Left colon (tissue), 2 donors: ENCODE measurements at regions of chr10 and their contacts with region 1.

Region 1: DNA sequence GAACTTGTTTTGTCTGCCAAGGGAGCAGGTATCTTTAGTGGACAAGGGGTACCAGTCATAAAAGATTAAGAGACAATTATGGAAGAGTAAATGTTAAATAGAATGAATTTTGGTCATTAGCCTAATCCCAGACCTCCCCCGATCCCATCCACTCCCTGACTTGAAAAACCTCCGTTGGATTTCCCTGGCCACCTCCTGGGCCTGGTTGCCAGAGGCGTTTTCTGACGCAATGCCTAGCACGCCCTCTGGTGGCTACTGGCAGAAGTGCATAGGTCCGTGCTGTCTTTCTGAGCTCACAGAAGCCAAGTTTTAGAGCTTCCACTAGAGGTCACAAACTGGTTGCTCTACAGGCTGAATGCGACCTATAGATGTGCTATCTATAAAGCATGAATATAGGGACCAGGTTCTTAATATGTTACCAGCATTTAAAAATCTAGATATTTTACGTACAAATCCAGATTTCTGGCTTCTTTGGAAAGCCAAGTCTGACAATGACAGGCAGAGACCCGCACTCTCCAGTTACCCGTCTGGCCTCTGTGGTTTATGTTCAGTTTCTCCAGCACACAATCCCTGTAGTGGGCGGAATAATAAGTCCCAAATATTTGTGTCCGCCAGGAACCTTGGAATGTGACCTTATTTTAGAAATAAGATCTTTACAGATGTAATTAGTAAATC is 39.8 kb downstream of the SPOCK2 start:
- DNase-seq: peak; percentile 79 to 95
- ATAC-seq: peak; percentile 90

Region 2: GRCh38 chr10:71888623-71889387 is 159.8 kb before region 1 on chr10:
- intact Hi-C with region 1: no loop called
- DNase-seq: peak; percentile 74 to 81
- ATAC-seq: peak; percentile 65

Region 3: DNA sequence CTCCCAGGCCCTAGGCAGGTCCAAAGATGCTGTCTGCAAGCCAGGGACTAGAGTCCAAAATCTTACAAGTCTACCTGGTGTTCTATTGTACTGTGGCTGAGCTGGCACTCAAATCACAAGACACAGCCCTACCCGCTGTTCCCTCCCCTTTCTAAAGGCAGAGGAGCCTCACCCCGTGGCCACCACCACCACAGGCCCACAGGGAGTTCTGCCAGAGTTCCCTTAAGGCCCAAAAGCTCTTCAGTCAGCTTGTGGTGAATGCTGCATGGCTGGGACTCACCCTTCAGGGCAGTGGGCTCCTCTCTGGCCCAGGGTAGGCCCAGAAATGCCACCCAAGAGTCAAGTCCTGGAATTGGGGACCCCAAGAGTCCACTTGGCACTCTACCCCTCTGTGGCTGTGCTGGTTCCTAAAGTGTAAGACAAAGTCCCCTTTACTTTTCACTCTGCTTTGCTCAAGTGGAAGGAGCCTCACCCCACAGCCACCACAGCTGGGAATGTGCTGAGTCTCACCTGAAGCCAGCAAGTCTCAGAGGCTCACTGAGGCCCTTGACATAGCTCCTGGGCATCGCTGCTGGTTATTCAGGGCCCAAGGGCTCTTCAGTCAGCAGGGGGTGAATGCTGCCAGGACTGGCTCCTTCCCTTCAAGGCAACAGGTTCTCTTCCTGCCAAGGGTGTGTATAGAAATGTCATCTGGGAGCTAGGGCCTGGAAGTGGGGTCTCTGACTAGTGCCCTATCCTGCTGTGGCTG is 148.7 kb before region 1 on chr10:
- intact Hi-C with region 1: loop called in 1 of 2 experiments (anchors 5 kb)
- DNase-seq: no peak
- ATAC-seq: no peak

Region 4: DNA sequence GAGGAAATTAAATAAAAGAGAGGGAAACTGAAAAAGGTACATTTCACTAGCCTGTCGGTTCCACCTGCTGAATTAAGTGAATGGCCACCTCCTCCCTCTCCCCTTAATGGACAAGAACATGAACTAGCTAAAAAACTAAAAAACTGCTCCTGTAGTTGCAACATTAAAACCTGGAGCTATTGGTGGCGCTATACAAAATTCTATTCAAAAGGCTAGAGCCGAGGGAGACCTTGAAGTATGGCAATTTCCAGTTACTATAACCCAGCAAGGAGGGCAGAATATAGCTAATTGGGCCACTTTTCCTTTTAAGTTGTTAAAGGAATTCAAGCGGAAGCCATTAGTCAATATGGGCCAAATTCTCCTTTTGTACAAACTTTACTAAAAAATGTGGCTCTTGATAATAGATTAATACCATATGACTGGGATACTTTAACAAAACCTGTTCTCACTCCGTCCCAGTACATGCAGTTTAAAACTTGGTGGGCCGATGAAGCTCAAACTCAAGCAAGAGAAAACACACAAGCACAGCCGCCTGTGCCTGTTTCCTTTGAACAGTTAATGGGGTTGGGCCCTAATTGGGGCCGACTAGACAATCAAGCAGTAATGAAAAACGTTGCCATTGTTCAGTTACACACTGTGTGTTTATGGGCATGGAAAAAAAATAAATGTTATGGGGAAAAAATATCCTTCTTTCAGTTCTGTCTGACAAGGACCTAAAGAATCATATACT is 90.9 kb before region 1 on chr10:
- intact Hi-C with region 1: loop called (anchors 2 to 10 kb)
- DNase-seq: no peak
- ATAC-seq: no peak

Region 5: DNA sequence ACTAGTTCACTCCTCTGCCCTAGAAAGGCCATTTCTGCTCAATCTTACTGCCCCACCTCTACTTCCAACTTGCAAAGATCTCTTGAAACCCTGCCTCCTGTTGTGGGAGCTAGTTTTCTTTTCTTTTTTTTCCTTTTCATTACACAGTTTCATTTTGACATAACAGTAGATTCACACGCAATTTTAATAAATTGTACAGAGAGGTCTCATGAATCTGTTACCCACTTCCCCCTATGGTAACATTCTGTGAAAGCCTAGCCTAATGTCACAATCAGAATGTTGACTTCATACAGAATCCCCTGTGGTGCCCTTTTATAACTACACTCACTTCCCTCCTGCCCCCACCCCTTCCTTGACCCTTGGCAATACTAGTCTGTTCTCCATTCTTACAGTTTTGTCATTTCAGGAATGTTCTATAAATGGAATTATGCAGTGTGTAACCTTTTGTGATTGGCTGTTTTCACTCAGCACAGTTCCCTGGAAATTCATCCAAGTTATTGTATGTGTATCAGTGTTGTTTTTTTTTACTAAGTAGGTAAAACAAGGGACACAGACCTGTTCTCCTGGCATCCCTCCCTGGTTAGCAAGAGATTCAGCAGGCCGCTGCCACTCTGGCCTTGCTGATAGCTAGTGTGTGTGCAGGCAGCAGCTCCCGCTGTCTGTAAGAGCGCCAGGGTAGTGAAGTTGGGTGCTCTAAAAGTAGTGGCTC is 62.9 kb before region 1 on chr10:
- intact Hi-C with region 1: no loop called
- DNase-seq: no peak
- ATAC-seq: no peak